Lower lobe of right lung (tissue), 2 donors: ENCODE measurements at regions of chr10 and their contacts with region 1.

Region 1: DNA sequence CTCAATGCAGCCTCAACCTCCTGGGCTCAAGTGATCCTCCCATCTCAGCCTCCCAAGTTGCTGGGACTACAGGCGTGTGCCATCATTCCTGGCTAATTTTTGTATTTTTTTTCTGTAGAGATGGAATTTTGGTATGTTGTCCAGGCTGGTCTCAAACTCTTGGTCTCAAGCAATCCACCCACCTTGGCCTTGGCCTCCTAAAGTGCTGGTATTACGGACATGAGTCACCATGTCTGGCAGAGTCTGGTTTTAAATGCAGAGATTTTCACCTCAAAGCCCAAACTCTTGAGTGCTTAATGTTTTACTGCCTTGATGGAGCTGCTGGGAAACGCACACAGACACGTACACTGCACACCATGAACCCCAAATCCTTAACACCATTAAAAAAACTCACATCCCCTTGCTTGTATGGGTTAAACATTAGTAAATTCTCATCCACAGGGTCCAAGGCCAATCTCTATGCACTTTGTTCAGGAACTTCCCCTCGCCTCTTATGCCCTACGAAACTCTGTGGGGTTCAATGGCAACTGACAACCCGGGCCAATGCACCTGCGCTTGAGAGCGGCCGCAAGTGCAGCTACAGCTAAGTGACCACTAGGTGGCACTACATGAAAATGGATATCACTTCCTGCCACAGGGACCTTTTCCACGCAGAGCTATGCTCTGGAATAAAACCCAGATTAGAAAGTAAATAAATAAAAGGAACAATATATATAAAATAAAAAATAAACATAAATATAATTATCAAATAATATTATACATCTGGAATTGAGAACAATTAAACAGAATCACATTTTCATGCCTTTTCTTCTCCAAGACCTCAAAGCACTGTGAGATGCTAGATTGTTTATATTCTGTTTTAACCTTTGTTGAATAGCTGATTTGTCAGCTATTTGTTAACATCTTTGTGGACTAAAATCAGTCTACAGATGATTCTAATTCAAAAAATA is 66.9 kb upstream of the AFAP1L2 start:
- DNase-seq: peak; percentile 74
- ATAC-seq: peak; percentile 87 to 95
- H3K4me3 ChIP-seq: no peak overlapping the region
- H3K27ac ChIP-seq: no peak overlapping the region
- H3K4me1 ChIP-seq: no peaks in the 10 kb centered on the region
- H3K27me3 ChIP-seq: no peaks in the 10 kb centered on the region
- CTCF ChIP-seq: peak; percentile 96

Region 2: GRCh38 chr10:114420811-114421485 is 50.3 kb before region 1 on chr10:
- intact Hi-C with region 1: no loop called
- DNase-seq: no peak
- ATAC-seq: no peak
- H3K4me3 ChIP-seq: no peak overlapping the region
- H3K27ac ChIP-seq: no peak overlapping the region
- H3K4me1 ChIP-seq: no peaks in the 10 kb centered on the region
- H3K27me3 ChIP-seq: no peaks in the 10 kb centered on the region
- CTCF ChIP-seq: no peak

Region 3: GRCh38 chr10:114526504-114527238 is 55.4 kb after region 1 on chr10:
- intact Hi-C with region 1: loop called (anchors 10 kb)
- DNase-seq: peak; percentile 77
- ATAC-seq: peak; percentile 94 to 95
- H3K4me3 ChIP-seq: peak overlapping the region; percentile 49
- H3K27ac ChIP-seq: peak overlapping the region; percentile 74
- H3K4me1 ChIP-seq: peaks cover 44% of the 10 kb centered on the region
- H3K27me3 ChIP-seq: no peaks in the 10 kb centered on the region
- CTCF ChIP-seq: no peak

Region 4: DNA sequence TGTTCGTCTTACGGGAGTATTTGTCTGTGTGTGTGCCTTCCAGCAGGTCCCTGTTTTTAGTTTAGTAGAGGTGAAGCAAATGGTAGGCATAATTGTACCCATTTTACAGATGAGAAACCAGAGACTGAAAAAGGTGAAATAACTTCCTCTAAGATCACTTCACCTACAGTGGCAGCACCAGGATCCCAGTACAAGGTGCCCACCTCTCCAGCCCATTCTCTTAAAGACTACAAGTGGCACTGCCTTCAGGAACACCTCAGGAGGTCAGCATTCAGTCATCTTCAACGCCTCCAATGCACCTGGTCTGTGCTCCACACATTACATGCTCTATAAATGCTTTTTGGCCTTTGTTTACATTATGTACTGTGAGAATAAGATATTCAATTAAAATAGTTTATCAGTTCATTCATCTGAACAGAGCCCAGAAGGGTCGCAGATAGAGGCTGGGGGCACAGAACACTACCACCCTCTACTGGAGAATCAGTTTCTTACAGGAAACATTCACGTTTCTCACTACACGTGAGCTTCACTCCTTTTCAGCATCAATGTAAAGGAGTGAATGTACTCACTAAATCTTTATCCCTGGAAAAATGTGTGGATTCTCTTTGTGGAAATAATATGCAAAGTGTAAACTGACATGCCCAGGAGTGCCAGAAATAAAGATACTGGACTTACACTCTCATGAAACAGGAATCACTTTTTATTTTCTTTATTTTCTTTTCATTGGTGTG is 232.3 kb after region 1 on chr10:
- intact Hi-C with region 1: loop called (anchors 10 kb)
- DNase-seq: no peak
- ATAC-seq: peak; percentile 38 to 71
- H3K4me3 ChIP-seq: no peak overlapping the region
- H3K27ac ChIP-seq: no peak overlapping the region
- H3K4me1 ChIP-seq: no peaks in the 10 kb centered on the region
- H3K27me3 ChIP-seq: no peaks in the 10 kb centered on the region
- CTCF ChIP-seq: peak; percentile 70

Region 5: DNA sequence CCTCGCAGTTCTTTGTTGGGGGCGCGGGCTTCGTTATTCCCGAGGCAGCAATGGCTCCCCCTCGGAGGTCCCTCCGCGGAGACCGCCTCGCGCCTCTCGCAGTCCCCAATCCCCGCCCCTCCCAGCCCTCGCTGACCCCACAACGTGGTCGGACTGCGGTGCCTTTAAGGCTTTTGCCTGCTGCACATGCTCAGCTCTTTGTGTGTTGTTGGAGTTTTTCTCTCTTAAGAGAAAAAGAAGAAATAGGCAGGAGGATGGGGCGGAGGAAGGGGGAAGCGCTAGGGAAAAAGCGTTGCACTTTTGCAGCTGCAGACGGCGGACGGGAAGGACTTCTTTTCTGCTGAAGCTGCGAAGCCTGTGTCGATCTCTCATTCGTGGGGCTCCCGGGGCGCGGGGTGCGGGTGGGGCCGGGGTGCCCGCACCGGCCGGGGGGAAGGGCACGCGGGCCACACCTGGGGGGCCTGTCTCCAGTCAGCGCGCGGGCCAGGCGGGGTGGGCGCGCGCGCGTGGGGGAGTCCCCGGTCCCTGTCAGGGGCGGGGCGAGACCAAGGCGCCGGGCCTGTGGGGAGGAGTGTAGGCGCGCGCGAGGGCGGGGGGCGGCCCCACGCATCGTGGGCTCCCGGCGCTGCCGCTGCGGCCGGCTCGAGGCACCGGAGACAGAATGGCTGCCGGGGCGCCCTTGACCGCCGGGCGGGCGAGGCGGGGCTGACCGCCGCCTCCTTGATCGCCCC is 621.5 kb after region 1 on chr10:
- intact Hi-C with region 1: no loop called
- DNase-seq: no peak
- ATAC-seq: peak; percentile 53 to 58
- H3K4me3 ChIP-seq: peak overlapping the region; percentile 60
- H3K27ac ChIP-seq: no peak overlapping the region
- H3K4me1 ChIP-seq: peaks cover 16% of the 10 kb centered on the region
- H3K27me3 ChIP-seq: peaks cover 39% of the 10 kb centered on the region
- CTCF ChIP-seq: no peak